ENCODE measurements at regions of chr17 and their contacts with region 1.

Region 1: GRCh38 chr17:19755821-19756510 is 7.9 kb upstream of the ALDH3A1 start:
- DNase-seq: no peak
- ATAC-seq: no peak
- H3K4me3 ChIP-seq: no peak overlapping the region
- H3K27ac ChIP-seq: no peak overlapping the region
- H3K4me1 ChIP-seq: peaks cover 5% of the 10 kb centered on the region
- H3K27me3 ChIP-seq: no peaks in the 10 kb centered on the region
- CTCF ChIP-seq: no peak

Region 2: GRCh38 chr17:19513897-19514488 is 242.0 kb before region 1 on chr17:
- intact Hi-C with region 1: loop called (anchors 5 kb)
- DNase-seq: peak; percentile 75
- ATAC-seq: peak; percentile 95
- H3K4me3 ChIP-seq: no peak overlapping the region
- H3K27ac ChIP-seq: no peak overlapping the region
- H3K4me1 ChIP-seq: peaks cover 6% of the 10 kb centered on the region
- H3K27me3 ChIP-seq: no peaks in the 10 kb centered on the region
- CTCF ChIP-seq: peak; percentile 90

Region 3: GRCh38 chr17:19614900-19615299 is 141.1 kb before region 1 on chr17:
- intact Hi-C with region 1: no loop called
- DNase-seq: no peak
- ATAC-seq: no peak
- H3K4me3 ChIP-seq: no peak overlapping the region
- H3K27ac ChIP-seq: no peak overlapping the region
- H3K4me1 ChIP-seq: no peaks in the 10 kb centered on the region
- H3K27me3 ChIP-seq: no peaks in the 10 kb centered on the region
- CTCF ChIP-seq: no peak

Region 4: GRCh38 chr17:19686400-19687090 is 69.4 kb before region 1 on chr17:
- intact Hi-C with region 1: no loop called
- DNase-seq: no peak
- ATAC-seq: no peak
- H3K4me3 ChIP-seq: no peak overlapping the region
- H3K27ac ChIP-seq: no peak overlapping the region
- H3K4me1 ChIP-seq: no peaks in the 10 kb centered on the region
- H3K27me3 ChIP-seq: no peaks in the 10 kb centered on the region
- CTCF ChIP-seq: no peak

Measured in upper lobe of right lung (tissue), 1 donor.